ENCODE measurements at regions of chr11 and their contacts with region 1.

Region 1: GRCh38 chr11:44178381-44178780 is 82.9 kb downstream of the EXT2 start:
- DNase-seq: peak; percentile 23
- H3K4me3 ChIP-seq: no peak overlapping the region
- H3K27me3 ChIP-seq: no peaks in the 10 kb centered on the region
- CTCF ChIP-seq: peak; percentile 36

Region 2: DNA sequence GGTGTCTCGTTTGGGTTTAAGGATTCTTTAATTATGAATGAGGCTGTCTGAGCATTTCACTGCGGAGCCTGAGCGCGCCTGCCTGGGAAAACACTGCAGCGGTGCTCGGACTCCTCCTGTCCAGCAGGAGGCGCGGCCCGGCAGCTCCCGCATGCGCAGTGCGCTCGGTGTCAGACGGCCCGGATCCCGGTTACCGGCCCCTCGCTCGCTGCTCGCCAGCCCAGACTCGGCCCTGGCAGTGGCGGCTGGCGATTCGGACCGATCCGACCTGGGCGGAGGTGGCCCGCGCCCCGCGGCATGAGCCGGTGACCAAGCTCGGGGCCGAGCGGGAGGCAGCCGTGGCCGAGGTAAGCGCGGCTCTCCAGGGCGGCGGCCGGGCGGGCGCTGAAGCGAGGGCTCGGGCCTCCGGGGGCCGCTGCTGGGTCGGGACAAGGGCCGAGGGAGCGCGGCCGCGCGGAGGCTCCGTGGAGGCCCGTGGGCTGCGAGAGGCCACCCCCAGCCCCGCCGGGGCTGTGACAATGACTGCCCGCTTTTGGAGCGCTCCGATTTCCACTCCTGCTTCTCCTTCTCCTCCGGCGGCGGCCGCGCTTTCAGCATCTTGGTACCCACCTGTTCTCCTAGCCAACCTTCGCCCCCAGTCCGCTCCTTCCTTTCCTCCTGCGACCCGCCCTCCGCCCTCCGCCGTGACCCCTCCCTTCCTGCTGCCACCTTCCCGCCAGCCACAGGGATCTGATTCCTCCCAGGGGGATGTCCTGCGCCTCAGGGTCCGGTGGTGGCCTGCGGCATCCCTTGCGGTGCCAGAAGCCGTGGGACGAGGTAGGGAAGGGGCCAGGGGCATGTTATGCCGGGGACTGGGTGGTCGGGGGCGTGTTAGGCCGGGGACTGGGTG is 82.6 kb before region 1 on chr11 and contains the start of gene EXT2:
- CTCF ChIA-PET with region 1: no interaction called
- POLR2A ChIA-PET with region 1: no interaction called
- DNase-seq: no peak
- H3K4me3 ChIP-seq: peak within 1 kb of the TSS; percentile 93
- H3K27me3 ChIP-seq: no peaks in the 10 kb centered on the region; the same call in 1 of the 2 replicates
- CTCF ChIP-seq: peak; percentile 96
- polyA plus RNA-seq, gene EXT2: 171 and 196 TPM in 2 replicates

Region 3: DNA sequence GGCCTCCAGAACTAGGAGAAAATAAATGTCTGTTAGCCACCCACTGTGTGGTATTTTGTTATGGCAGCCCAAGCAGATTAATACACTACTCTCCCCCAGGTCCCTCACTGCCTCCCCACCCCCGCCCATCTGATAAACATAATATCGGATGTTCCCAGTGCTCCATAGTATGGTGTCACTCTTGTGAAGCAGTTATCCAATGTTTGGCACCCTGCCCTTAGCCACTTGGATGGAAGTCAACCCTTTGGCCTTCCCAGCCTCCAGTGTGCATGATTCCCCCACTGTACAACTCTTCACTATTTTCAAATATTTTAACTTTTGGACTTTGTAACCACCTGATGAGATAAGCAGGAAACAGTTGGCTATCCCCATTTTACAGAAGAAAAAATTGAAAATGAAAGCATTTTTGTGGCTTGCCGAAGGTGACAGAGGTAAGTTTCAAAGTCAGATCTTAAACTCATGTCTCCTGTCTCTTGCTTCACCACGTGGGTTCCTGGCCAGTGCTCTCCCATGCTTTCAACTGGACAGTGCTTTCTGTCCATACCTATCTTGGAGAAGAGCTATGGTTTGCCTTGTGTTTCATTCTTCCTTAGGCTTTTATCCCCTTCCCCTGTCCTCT is 78.4 kb after region 1 on chr11:
- CTCF ChIA-PET with region 1: interaction called, 13 read pairs
- POLR2A ChIA-PET with region 1: no interaction called
- DNase-seq: no peak
- H3K4me3 ChIP-seq: no peak overlapping the region
- H3K27me3 ChIP-seq: no peaks in the 10 kb centered on the region
- CTCF ChIP-seq: no peak

Measured in BJ (cell line).